ENCODE measurements at regions of chr6 and their contacts with region 1.

Region 1: GRCh38 chr6:13574149-13574570 is 241 bp upstream of the SIRT5 start:
- DNase-seq: peak; percentile 89
- ATAC-seq: peak; percentile 84
- H3K4me3 Mint-ChIP-seq: peak overlapping the region; percentile 90
- H3K27ac Mint-ChIP-seq: peak overlapping the region; percentile 94
- H3K4me1 Mint-ChIP-seq: peaks cover 23% of the 10 kb centered on the region
- H3K27me3 Mint-ChIP-seq: no peaks in the 10 kb centered on the region
- CTCF ChIP-seq: no peak

Region 2: DNA sequence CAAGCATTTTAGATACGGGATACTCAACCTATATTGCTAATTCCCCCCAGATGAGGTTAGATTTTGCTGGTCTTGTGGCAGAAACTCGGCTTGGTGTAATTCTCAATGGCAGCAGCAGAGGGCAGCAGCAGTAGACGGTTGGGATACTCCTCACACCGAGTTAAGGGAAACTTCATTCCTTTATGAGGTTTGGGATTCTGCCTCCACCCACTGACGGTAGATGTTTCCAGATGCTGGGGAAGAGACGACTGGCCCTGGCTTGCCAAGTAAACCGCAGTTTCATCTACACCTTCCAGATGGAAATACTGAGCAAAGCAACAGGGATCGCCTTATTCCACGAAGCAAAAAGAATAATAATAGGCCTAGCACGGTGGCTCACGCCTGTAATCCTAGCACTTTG is 237.6 kb before region 1 on chr6:
- CTCF ChIA-PET with region 1: interaction called, 24 read pairs
- POLR2A ChIA-PET with region 1: interaction called, 6 read pairs
- intact Hi-C with region 1: loop called (anchors 1 kb)
- DNase-seq: peak; percentile 72
- ATAC-seq: peak; percentile 73
- H3K4me3 Mint-ChIP-seq: no peak overlapping the region
- H3K27ac Mint-ChIP-seq: no peak overlapping the region
- H3K4me1 Mint-ChIP-seq: peaks cover 51% of the 10 kb centered on the region
- H3K27me3 Mint-ChIP-seq: no peaks in the 10 kb centered on the region
- CTCF ChIP-seq: no peak

Region 3: DNA sequence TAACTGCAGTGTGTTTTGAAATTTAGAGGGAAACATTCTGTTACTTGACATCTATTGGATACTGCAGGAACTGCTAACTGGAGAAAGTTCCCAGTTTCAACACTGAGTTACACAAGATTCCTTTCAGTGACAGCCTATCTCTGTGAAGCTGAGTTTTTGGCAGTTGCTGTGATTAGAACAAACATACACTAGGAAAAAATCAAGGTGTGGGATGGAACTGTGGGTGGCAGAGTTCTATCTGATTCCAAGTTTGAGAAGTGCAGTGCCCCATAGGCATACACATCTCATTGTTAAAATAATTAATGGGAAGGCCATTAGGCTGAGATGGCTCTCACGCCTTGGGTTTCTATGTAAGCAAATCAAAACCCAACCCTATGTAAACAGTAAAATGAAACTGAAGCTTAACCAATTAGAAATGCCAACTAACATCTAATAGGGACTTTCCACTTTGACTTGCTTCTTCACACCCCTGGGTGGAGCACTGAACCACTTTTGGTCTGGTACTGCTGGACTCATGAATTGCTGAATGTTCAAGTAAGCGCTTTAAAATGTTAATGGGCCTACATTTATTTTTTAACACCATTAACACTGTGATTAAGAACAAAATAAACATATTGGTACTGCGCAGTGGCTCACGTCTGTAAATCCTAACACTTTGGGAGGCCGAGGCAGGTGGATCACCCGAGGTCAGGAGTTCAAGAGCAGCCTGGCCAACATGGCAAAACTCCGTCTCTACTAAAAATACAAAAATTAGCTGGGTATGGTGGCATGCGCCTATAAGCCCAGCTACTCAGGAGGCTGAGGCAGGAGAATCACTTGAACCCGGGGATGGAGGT is 190.6 kb before region 1 on chr6:
- CTCF ChIA-PET with region 1: interaction called, 20 read pairs
- POLR2A ChIA-PET with region 1: interaction called, 6 read pairs
- intact Hi-C with region 1: loop called (anchors 1 kb)
- DNase-seq: no peak
- ATAC-seq: peak; percentile 98
- H3K4me3 Mint-ChIP-seq: peak overlapping the region; percentile 44
- H3K27ac Mint-ChIP-seq: peak overlapping the region; percentile 82
- H3K4me1 Mint-ChIP-seq: peaks cover 73% of the 10 kb centered on the region
- H3K27me3 Mint-ChIP-seq: no peaks in the 10 kb centered on the region
- CTCF ChIP-seq: no peak

Region 4: GRCh38 chr6:13454286-13455221 is 119.6 kb before region 1 on chr6:
- CTCF ChIA-PET with region 1: interaction called, 4 read pairs
- POLR2A ChIA-PET with region 1: interaction called, 6 read pairs
- intact Hi-C with region 1: loop called (anchors 1 kb)
- DNase-seq: peak; percentile 37
- ATAC-seq: peak; percentile 81
- H3K4me3 Mint-ChIP-seq: peak overlapping the region; percentile 65
- H3K27ac Mint-ChIP-seq: peak overlapping the region; percentile 85
- H3K4me1 Mint-ChIP-seq: peaks cover 60% of the 10 kb centered on the region
- H3K27me3 Mint-ChIP-seq: no peaks in the 10 kb centered on the region
- CTCF ChIP-seq: no peak

Region 5: GRCh38 chr6:13561624-13562267 is 12.4 kb before region 1 on chr6:
- CTCF ChIA-PET with region 1: interaction called, 5 read pairs
- POLR2A ChIA-PET with region 1: interaction called, 10 read pairs
- intact Hi-C with region 1: no loop called
- DNase-seq: no peak
- ATAC-seq: no peak
- H3K4me3 Mint-ChIP-seq: no peak overlapping the region
- H3K27ac Mint-ChIP-seq: no peak overlapping the region
- H3K4me1 Mint-ChIP-seq: no peaks in the 10 kb centered on the region
- H3K27me3 Mint-ChIP-seq: peaks cover 4% of the 10 kb centered on the region
- CTCF ChIP-seq: no peak

Region 6: GRCh38 chr6:13795041-13795750 is 221.0 kb after region 1 on chr6:
- CTCF ChIA-PET with region 1: no interaction called
- POLR2A ChIA-PET with region 1: no interaction called
- intact Hi-C with region 1: loop called (anchors 1 kb)
- DNase-seq: peak; percentile 57
- ATAC-seq: peak; percentile 98
- H3K4me3 Mint-ChIP-seq: no peak overlapping the region
- H3K27ac Mint-ChIP-seq: no peak overlapping the region
- H3K4me1 Mint-ChIP-seq: peaks cover 7% of the 10 kb centered on the region
- H3K27me3 Mint-ChIP-seq: no peaks in the 10 kb centered on the region
- CTCF ChIP-seq: peak; percentile 68

Region 7: DNA sequence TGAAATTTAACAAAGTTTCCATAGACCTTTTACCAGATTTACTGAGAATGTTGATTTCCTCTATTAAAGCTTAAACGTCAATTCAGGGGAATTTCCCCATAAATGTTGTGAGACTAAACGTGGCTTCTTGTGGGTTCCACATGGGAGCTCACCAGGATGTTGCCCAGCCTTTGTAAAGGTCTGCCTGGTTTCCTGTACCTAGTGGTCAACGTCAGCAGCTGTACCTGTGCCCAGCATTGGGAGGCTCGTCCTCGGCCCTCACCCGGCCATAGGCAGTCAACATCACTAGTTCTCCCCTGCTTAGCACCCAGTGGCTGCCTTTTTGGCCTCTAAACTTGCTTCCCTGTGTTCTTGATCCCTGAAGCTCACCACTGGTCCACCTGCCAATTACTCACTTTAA is 521.3 kb after region 1 on chr6:
- CTCF ChIA-PET with region 1: no interaction called
- POLR2A ChIA-PET with region 1: interaction called, 3 read pairs
- intact Hi-C with region 1: loop called (anchors 1 kb)
- DNase-seq: peak; percentile 72
- ATAC-seq: peak; percentile 73
- H3K4me3 Mint-ChIP-seq: peak overlapping the region; percentile 85
- H3K27ac Mint-ChIP-seq: peak overlapping the region; percentile 100
- H3K4me1 Mint-ChIP-seq: peaks cover 96% of the 10 kb centered on the region
- H3K27me3 Mint-ChIP-seq: no peaks in the 10 kb centered on the region
- CTCF ChIP-seq: no peak

Measured in activated B cell treated with CpG ODN at 0.5 μM for 24 hours (primary cell).